Ovary (tissue), 10 donors: ENCODE measurements at regions of chr7 and their contacts with region 1.

Region 1: DNA sequence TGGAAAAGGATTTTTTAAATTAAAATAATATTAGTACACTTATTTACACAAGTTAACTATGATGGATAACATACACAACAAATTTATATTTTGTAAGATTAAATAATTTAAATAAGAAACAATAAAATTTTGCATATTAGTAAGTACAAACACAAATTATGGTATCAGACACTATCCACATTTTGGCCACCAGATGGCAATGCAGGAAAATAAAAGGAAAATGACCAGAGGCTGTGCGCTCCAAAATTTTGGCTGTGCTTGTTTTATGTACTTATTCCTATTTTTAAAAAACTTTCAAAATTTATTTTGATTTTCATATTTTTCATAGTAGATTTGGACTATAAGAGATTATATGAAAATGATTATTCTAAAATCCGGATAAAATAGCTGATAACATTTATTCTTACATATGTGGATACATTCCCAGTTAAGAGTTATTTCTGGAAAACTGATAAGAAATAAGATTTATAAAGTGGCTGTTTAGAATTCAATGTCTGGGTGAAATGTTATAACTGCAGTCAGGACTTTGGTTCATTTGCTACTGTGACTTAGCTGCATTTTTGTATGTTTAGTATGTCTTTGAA is 274.7 kb upstream of the HGF start:
- DNase-seq: peak in 3 of 5 donors; percentile 23 to 48 (median 39)
- H3K4me3 ChIP-seq: no peak overlapping the region
- H3K27ac ChIP-seq: no peak overlapping the region
- H3K4me1 ChIP-seq: no peaks in the 10 kb centered on the region
- H3K27me3 ChIP-seq: no peaks in the 10 kb centered on the region
- CTCF ChIP-seq: peak; percentile 22 to 71 (median 69)
- EP300 ChIP-seq: no peak
- POLR2A ChIP-seq: no peak

Region 2: GRCh38 chr7:82481499-82482097 is 437.0 kb after region 1 on chr7:
- intact Hi-C with region 1: loop called in 1 of 4 experiments (anchors 10 kb)
- DNase-seq: no peak
- H3K4me3 ChIP-seq: no peak overlapping the region
- H3K27ac ChIP-seq: no peak overlapping the region
- H3K4me1 ChIP-seq: no peaks in the 10 kb centered on the region
- H3K27me3 ChIP-seq: no peaks in the 10 kb centered on the region
- CTCF ChIP-seq: peak; percentile 36 to 57 (median 43)
- EP300 ChIP-seq: no peak
- POLR2A ChIP-seq: no peak

Region 3: GRCh38 chr7:82572195-82572880 is 527.7 kb after region 1 on chr7:
- intact Hi-C with region 1: loop called in 2 of 4 experiments (anchors 5 to 10 kb)
- DNase-seq: peak; percentile 84 to 91 (median 86)
- H3K4me3 ChIP-seq: no peak overlapping the region
- H3K27ac ChIP-seq: no peak overlapping the region
- H3K4me1 ChIP-seq: no peaks in the 10 kb centered on the region
- H3K27me3 ChIP-seq: no peaks in the 10 kb centered on the region
- CTCF ChIP-seq: peak; percentile 59 to 73 (median 69)
- EP300 ChIP-seq: no peak
- POLR2A ChIP-seq: no peak

Region 4: DNA sequence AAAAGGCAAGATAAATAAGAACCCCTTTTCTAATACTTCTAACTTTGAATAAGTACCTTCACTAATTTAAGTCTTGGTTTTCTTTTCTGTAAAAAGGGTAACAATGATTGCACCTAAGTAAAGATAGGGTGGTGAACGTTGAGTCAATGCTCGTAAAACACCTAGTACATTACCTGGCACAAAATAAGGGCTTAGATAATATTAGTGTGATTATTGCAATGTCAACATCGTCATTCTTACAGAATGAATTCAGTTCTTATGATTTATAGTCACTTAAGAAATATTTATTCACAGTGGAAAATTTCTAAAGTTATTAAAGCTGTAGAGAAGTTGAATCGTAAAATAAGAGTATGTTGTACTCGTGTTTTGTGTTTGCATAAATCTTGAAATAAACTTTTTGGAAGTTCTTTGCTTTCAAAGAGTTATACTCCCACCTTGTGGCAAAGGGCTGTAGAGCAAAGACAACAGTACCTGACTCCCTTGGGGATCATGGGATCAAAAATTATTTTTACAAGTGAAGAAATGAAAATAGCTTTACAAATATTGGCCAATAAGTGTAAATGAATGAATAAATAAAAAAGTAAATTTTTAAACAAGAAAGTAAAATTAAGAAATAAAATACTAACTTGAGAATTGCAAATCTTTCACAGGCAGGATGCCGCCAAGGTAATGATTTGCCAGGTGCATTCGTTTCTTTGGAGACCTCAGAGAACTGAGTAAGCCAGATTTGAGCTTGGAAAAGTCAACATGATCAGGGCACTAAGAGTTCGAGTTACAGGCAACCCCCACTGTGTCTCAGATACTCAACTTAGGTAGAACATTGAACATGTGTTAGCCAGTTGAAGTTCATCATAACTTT is 684.8 kb after region 1 on chr7:
- intact Hi-C with region 1: loop called in 1 of 4 experiments (anchors 10 kb)
- DNase-seq: no peak
- H3K4me3 ChIP-seq: no peak overlapping the region
- H3K27ac ChIP-seq: no peak overlapping the region
- H3K4me1 ChIP-seq: no peaks in the 10 kb centered on the region
- H3K27me3 ChIP-seq: no peaks in the 10 kb centered on the region
- CTCF ChIP-seq: peak in 2 of 3 donors; percentile 12 to 13
- EP300 ChIP-seq: no peak
- POLR2A ChIP-seq: no peak